MCF 10A (cell line): ENCODE measurements at regions of chr5 and their contacts with region 1.

Region 1: GRCh38 chr5:170809551-170809950 is 26.0 kb downstream of the GABRP start:
- DNase-seq: peak; percentile 75
- H3K4me3 Mint-ChIP-seq: no peak overlapping the region
- H3K27ac Mint-ChIP-seq: no peak overlapping the region
- H3K4me1 Mint-ChIP-seq: no peaks in the 10 kb centered on the region
- H3K27me3 Mint-ChIP-seq: no peaks in the 10 kb centered on the region
- CTCF ChIP-seq: peak; percentile 87

Region 2: DNA sequence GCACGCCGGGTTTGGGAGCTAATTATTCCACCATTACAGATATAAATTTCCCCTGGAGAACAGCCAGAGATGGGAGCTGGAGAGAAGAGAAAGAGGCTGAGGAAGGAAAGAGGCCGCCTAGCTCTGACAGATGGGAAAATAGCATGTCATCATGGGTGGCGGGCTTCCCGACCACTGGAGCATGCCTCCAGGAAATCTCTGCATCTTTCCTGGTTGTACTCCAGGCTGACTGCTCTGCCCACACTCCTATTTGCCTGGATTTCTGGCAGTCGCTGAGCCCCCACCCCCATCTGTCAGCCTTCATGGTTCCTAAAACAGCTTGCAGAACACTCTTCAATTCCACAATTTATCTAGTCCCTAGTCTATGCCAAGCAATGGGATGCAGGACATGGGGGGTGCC is 40.3 kb before region 1 on chr5:
- CTCF ChIA-PET with region 1: no interaction called
- POLR2A ChIA-PET with region 1: no interaction called
- intact Hi-C with region 1: no loop called
- DNase-seq: no peak
- H3K4me3 Mint-ChIP-seq: no peak overlapping the region
- H3K27ac Mint-ChIP-seq: no peak overlapping the region
- H3K4me1 Mint-ChIP-seq: peaks cover 5% of the 10 kb centered on the region
- H3K27me3 Mint-ChIP-seq: no peaks in the 10 kb centered on the region
- CTCF ChIP-seq: no peak

Region 3: GRCh38 chr5:170791325-170791954 is 18.1 kb before region 1 on chr5:
- CTCF ChIA-PET with region 1: interaction called, 20 read pairs
- POLR2A ChIA-PET with region 1: no interaction called
- intact Hi-C with region 1: no loop called
- DNase-seq: peak; percentile 88
- H3K4me3 Mint-ChIP-seq: no peak overlapping the region
- H3K27ac Mint-ChIP-seq: no peak overlapping the region
- H3K4me1 Mint-ChIP-seq: no peaks in the 10 kb centered on the region
- H3K27me3 Mint-ChIP-seq: no peaks in the 10 kb centered on the region
- CTCF ChIP-seq: peak; percentile 94

Region 4: GRCh38 chr5:170896779-170897178 is 87.2 kb after region 1 on chr5:
- CTCF ChIA-PET with region 1: interaction called, 4 read pairs
- POLR2A ChIA-PET with region 1: no interaction called
- intact Hi-C with region 1: loop called (anchors 2 kb)
- DNase-seq: peak; percentile 42
- H3K4me3 Mint-ChIP-seq: no peak overlapping the region
- H3K27ac Mint-ChIP-seq: peak overlapping the region; percentile 49
- H3K4me1 Mint-ChIP-seq: no peaks in the 10 kb centered on the region
- H3K27me3 Mint-ChIP-seq: no peaks in the 10 kb centered on the region
- CTCF ChIP-seq: peak; percentile 53

Region 5: GRCh38 chr5:171152382-171152781 is 342.8 kb after region 1 on chr5:
- CTCF ChIA-PET with region 1: interaction called, 6 read pairs
- POLR2A ChIA-PET with region 1: no interaction called
- intact Hi-C with region 1: loop called (anchors 1 kb)
- DNase-seq: peak; percentile 47
- H3K4me3 Mint-ChIP-seq: no peak overlapping the region
- H3K27ac Mint-ChIP-seq: no peak overlapping the region
- H3K4me1 Mint-ChIP-seq: no peaks in the 10 kb centered on the region
- H3K27me3 Mint-ChIP-seq: no peaks in the 10 kb centered on the region
- CTCF ChIP-seq: no peak

Region 6: GRCh38 chr5:171207256-171207847 is 397.8 kb after region 1 on chr5:
- CTCF ChIA-PET with region 1: interaction called, 9 read pairs
- POLR2A ChIA-PET with region 1: no interaction called
- intact Hi-C with region 1: loop called (anchors 1 kb)
- DNase-seq: peak; percentile 69
- H3K4me3 Mint-ChIP-seq: no peak overlapping the region
- H3K27ac Mint-ChIP-seq: no peak overlapping the region
- H3K4me1 Mint-ChIP-seq: peaks cover 4% of the 10 kb centered on the region
- H3K27me3 Mint-ChIP-seq: no peaks in the 10 kb centered on the region
- CTCF ChIP-seq: peak; percentile 74

Region 7: DNA sequence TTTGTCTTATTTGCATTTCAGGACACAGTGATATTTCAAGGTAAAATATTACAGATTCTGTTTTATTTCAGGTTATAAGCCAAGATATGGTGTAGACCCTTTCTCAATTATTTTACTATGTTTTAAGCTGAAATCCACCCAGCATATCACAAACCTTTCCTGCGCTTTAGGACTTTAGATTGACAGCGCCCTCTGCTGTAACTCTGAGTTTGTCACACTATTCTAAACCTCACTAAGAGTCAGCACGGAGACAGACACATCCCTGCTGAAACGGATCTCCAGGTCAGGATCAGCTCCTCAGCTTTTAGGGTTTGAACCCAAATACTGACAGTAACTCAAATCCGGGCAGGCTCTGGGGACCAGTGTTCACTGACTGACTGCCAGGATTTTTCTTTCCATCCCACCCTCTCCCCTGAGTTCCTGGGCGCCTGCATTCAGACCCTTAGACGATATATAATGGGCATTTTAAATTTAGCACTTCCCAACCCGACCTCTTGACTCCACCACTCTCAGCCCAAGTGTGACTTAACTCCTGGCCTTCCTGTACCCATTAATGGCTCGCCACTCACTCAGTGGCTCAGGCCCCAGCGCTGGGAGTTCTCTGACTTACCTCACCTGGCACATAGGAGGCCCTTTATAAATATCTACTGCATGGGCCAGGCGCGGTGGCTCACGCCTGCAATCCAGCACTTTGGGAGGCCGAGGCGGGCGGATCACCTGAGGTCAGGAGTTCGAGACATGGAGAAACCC is 533.0 kb after region 1 on chr5:
- CTCF ChIA-PET with region 1: interaction called, 50 read pairs
- POLR2A ChIA-PET with region 1: no interaction called
- intact Hi-C with region 1: loop called (anchors 1 kb)
- DNase-seq: peak; percentile 82
- H3K4me3 Mint-ChIP-seq: no peak overlapping the region
- H3K27ac Mint-ChIP-seq: no peak overlapping the region
- H3K4me1 Mint-ChIP-seq: no peaks in the 10 kb centered on the region
- H3K27me3 Mint-ChIP-seq: no peaks in the 10 kb centered on the region
- CTCF ChIP-seq: peak; percentile 94